CD8-positive, alpha-beta T cell (primary cell): ENCODE measurements at regions of chr17 and their contacts with region 1.

Region 1: DNA sequence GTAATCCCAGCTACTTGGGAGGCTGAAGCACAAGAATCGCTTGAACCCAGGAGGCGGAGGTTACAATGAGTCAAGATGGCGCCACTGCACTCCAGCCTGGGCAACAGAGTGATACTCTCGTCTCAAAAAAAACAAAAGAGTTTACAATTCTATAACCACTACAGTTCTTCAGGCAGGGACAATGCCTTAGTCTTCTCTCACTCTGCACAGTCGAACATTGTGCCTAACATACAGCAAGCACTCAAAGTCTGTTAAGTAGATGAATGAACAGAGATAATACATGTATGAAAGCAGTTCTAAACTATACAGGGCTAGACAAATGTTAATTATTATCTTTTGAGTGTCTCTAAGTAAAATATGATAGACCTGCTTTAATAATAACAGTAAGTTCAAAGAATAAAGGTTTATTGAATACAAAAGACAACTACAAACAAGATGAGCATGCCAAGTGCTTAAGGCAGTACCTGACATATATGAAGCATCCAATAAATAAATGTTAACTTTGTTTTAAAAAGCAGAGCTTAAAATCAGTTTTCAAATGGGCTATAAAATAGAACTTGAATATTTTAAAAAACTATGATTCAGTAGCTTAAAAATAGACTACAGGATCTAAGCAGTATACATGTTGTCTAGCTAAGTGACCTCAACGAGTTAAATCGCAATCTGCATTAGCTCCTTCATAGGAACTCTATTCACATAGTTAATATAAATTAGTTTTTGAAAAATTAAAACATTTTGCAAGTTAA is 19.3 kb downstream of the INTS2 start:
- DNase-seq: no peak
- ATAC-seq: no peak
- H3K4me3 ChIP-seq: no peak overlapping the region
- H3K4me3 Mint-ChIP-seq: no peak overlapping the region
- H3K27ac ChIP-seq: no peak overlapping the region
- H3K27ac Mint-ChIP-seq: no peak overlapping the region
- H3K4me1 ChIP-seq: no peaks in the 10 kb centered on the region
- H3K4me1 Mint-ChIP-seq: peaks cover 7% of the 10 kb centered on the region
- H3K27me3 ChIP-seq: no peaks in the 10 kb centered on the region
- H3K27me3 Mint-ChIP-seq: no peaks in the 10 kb centered on the region
- CTCF ChIP-seq: no peak

Region 2: GRCh38 chr17:61856035-61856434 is 52.4 kb before region 1 on chr17:
- CTCF ChIA-PET with region 1: no interaction called
- POLR2A ChIA-PET with region 1: no interaction called
- intact Hi-C with region 1: no loop called
- DNase-seq: no peak
- ATAC-seq: no peak
- H3K4me3 ChIP-seq: no peak overlapping the region
- H3K4me3 Mint-ChIP-seq: no peak overlapping the region
- H3K27ac ChIP-seq: no peak overlapping the region
- H3K27ac Mint-ChIP-seq: no peak overlapping the region
- H3K4me1 ChIP-seq: no peaks in the 10 kb centered on the region
- H3K4me1 Mint-ChIP-seq: no peaks in the 10 kb centered on the region
- H3K27me3 ChIP-seq: no peaks in the 10 kb centered on the region
- H3K27me3 Mint-ChIP-seq: no peaks in the 10 kb centered on the region
- CTCF ChIP-seq: no peak

Region 3: DNA sequence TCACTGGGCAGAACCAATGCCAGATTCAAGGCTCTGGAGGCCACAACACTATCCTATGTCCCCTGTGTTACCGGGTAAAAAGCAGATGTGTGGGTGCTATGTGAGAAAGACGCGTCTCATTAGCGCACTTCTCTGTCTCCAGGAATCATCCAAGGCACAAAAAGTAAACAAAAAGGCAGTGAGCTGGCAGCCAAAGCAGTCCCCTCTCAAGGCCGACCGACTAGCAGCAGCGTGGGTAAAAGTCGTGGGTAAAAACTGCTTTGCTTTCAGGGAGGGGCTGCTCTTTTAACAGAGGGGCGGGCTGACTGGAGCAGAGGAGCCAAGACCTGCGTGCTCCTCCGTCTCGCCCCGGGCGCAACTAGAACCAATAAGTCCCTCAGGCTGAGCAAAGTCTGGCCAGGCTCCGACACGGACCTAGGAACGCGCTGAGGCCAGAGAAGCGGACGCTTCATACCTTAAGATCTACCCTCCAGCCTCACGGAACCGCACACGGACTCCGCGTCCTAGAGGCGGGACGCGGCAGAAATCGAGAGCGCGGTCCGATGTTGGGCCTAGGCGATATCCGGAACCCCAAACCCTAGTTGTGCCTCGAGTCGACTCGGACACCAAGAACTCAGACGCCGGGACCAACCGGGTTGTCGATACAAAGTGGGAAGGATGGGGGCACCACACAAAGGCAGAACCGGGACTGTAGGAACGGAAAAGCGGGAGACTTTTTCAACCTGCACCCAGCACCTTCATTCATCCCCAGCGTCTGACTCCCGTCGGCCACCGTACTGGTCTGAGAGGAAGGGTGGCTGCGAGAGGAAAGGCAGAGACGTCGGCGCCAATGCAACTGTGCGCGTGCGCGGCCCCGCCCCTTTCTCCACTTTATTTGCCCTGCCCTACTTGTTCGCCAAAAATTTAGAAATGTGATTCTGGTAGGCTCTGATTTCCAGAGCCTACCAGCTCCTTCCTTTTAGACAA is 19.0 kb after region 1 on chr17 and contains the start of gene INTS2:
- CTCF ChIA-PET with region 1: no interaction called
- POLR2A ChIA-PET with region 1: interaction called, 3 read pairs
- intact Hi-C with region 1: loop called (anchors 2 kb)
- DNase-seq: peak; percentile 92 to 98 (median 96)
- ATAC-seq: peak; percentile 84
- H3K4me3 ChIP-seq: peak within 1 kb of the TSS; percentile 80 to 91
- H3K4me3 Mint-ChIP-seq: peak within 1 kb of the TSS; percentile 90
- H3K27ac ChIP-seq: peak within 1 kb of the TSS; percentile 71 to 92
- H3K27ac Mint-ChIP-seq: peak within 1 kb of the TSS; percentile 98
- H3K4me1 ChIP-seq: peaks cover 14% of the 10 kb centered on the region
- H3K4me1 Mint-ChIP-seq: peaks cover 22% of the 10 kb centered on the region
- H3K27me3 ChIP-seq: no peaks in the 10 kb centered on the region
- H3K27me3 Mint-ChIP-seq: peaks cover 2% of the 10 kb centered on the region
- CTCF ChIP-seq: no peak
- total RNA-seq, gene INTS2: 9.4 to 9.6 TPM

Region 4: GRCh38 chr17:61955621-61956020 is 47.2 kb after region 1 on chr17:
- CTCF ChIA-PET with region 1: no interaction called
- POLR2A ChIA-PET with region 1: no interaction called
- intact Hi-C with region 1: no loop called
- DNase-seq: no peak
- ATAC-seq: no peak
- H3K4me3 ChIP-seq: no peak overlapping the region
- H3K4me3 Mint-ChIP-seq: no peak overlapping the region
- H3K27ac ChIP-seq: no peak overlapping the region
- H3K27ac Mint-ChIP-seq: no peak overlapping the region
- H3K4me1 ChIP-seq: no peaks in the 10 kb centered on the region
- H3K4me1 Mint-ChIP-seq: no peaks in the 10 kb centered on the region
- H3K27me3 ChIP-seq: no peaks in the 10 kb centered on the region
- H3K27me3 Mint-ChIP-seq: no peaks in the 10 kb centered on the region
- CTCF ChIP-seq: no peak

Region 5: DNA sequence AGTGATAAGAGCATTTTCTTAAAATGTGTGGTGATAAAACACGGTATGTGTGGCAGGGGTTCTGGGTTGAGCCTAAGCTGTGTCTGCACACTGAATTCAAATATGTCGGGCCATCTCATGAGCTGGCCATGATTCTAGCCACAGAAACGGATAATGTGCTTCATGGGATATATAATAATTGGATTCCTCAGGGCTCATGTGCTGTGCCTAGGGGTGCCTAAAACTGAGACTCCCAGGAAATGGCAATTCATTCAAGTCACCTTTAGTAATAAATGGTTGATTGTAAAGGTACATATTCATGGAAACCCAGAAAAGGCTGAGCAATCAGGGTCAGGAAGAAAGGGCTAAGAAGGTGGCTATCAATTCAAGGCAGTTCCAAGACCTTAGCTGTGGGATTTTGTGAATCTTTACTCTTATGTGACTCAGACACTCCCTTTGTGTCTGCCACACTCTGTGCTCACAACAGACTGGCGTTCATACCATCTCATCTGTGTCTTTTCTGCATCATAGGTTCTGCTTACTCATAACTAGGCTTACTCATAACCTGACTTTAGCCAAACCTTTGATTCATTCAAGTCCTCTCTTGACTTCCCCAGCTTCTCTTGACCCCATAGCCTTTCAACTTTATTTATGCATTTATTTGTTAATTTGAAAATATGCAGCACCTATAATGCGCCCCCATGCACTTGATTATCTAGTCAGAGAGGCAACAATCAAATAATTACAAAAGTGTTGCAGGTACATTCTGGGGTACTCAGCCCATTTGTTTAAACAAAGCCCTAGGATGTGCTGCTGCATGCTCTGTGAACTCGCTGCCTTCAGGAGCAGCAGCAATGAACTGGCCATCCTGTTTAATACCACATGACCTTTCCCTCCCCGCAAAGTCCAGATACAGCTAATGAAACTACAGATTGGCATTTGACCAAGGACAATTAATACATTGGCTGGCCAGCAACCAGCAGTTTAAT is 185.0 kb after region 1 on chr17:
- CTCF ChIA-PET with region 1: no interaction called
- POLR2A ChIA-PET with region 1: no interaction called
- intact Hi-C with region 1: no loop called
- DNase-seq: no peak
- ATAC-seq: no peak
- H3K4me3 ChIP-seq: no peak overlapping the region
- H3K4me3 Mint-ChIP-seq: no peak overlapping the region
- H3K27ac ChIP-seq: no peak overlapping the region
- H3K27ac Mint-ChIP-seq: no peak overlapping the region
- H3K4me1 ChIP-seq: no peaks in the 10 kb centered on the region
- H3K4me1 Mint-ChIP-seq: peaks cover under 1% of the 10 kb centered on the region
- H3K27me3 ChIP-seq: peaks cover 0 to 2% of the 10 kb centered on the region in 2 experiments
- H3K27me3 Mint-ChIP-seq: no peaks in the 10 kb centered on the region
- CTCF ChIP-seq: no peak